ENCODE measurements at regions of chr15 and their contacts with region 1.

Region 1: GRCh38 chr15:34587717-34588674 is 4.5 kb upstream of the GOLGA8B start:
- DNase-seq: peak; percentile 23 to 79 (median 62)
- ATAC-seq: peak; percentile 65
- H3K4me3 ChIP-seq: no peak overlapping the region
- H3K4me3 Mint-ChIP-seq: peak overlapping the region; percentile 72
- H3K27ac ChIP-seq: no peak overlapping the region
- H3K27ac Mint-ChIP-seq: peak overlapping the region; percentile 62
- H3K4me1 ChIP-seq: peaks cover 5% of the 10 kb centered on the region
- H3K4me1 Mint-ChIP-seq: peaks cover 8% of the 10 kb centered on the region
- H3K27me3 ChIP-seq: no peaks in the 10 kb centered on the region
- H3K27me3 Mint-ChIP-seq: peaks cover 18% of the 10 kb centered on the region
- CTCF ChIP-seq: peak; percentile 83

Region 2: DNA sequence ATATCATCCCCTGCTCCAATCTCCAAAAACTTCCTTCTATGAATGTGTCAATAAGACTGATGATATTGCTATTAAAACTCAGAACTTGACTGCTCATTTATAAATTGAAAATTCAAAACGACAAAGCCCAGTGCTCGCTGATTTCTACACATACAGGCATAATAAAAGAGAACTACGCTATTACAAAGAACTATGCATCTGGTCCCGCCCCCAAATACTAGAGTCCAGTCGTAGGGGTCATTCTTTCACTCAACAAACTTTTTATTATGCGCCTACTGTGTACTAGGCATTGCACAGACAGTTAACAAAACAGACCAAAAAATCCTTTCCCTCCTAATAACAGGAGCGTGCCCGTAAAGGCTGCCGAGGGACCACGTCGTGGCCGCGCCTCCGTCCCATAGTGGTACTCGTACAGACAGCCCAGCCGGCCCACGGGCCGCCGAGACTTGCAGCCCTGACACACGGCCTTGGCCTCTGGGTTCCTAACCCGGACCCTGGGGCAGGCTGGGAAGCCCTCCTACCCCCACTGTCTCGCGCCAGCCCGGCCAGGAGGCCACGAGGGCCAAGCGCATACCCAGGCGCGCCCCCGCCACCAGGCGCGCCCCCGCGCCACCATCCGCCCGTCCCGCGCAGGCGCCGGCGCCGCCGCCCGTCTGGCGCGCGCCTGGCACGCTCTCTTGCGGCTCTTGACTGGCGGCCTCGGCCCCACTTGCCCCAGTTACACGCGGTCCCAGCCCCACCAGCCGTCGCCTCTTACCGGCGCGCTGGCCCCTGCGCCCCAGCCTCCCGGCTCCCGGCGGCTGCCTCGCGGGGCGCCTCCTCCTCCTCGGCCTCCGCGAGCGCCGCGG is 549.7 kb before region 1 on chr15:
- CTCF ChIA-PET with region 1: no interaction called
- POLR2A ChIA-PET with region 1: interaction called, 3 read pairs
- intact Hi-C with region 1: loop called in 1 of 2 experiments (anchors 5 kb)
- DNase-seq: peak; percentile 44 to 89 (median 73)
- ATAC-seq: peak; percentile 84
- H3K4me3 ChIP-seq: peak overlapping the region; percentile 78 to 97
- H3K4me3 Mint-ChIP-seq: peak overlapping the region; percentile 94
- H3K27ac ChIP-seq: peak overlapping the region; percentile 75 to 88
- H3K27ac Mint-ChIP-seq: peak overlapping the region; percentile 94
- H3K4me1 ChIP-seq: peaks cover 19% of the 10 kb centered on the region
- H3K4me1 Mint-ChIP-seq: peaks cover 20% of the 10 kb centered on the region
- H3K27me3 ChIP-seq: no peaks in the 10 kb centered on the region
- H3K27me3 Mint-ChIP-seq: no peaks in the 10 kb centered on the region
- CTCF ChIP-seq: no peak

Region 3: DNA sequence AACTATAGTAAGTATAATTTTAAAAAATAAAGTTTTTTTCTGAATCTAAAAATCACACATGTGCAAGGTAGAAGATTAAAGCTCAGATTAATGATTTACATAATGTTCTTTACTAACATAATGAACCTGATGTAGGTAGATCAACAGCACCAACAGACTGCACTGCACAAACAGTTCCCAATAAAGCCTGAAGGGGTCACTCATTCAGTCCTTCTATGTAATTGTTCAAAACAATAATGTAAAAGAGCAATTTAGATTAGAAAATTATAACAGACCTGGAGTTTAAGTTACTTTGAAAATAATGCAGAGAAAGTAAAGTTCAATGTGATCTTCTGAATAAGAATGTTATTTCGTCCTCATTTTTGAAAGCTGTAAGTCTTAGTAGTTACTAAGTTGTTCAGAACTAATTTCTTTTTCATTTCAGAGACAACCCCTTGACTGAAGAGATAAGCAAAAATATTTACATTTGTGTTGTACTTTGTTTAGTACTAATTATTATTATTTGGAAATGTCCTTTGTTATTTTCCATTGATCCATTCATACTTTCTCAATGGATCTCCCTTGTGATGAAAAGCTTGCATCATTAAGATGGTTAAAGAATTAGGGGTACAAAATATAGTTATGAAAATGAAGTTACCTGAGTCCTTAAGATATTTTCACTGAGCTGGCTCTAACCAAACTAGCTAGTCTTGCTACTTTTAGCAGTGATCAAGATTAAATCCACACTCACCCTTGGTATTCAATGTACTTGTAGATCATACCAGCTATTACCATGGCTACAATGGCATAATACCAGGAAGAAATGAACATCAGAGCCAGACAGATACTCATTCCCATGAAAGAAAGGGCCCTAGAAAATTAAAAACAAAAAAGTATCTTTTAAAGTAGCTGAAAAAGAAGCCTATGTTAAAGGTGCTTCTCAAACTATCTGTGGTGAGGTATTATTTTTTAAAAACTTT is 346.3 kb before region 1 on chr15:
- CTCF ChIA-PET with region 1: interaction called, 4 read pairs
- POLR2A ChIA-PET with region 1: no interaction called
- intact Hi-C with region 1: loop called (anchors 5 kb)
- DNase-seq: peak in 5 of 9 experiments; percentile 28 to 74 (median 31)
- ATAC-seq: peak; percentile 93
- H3K4me3 ChIP-seq: no peak overlapping the region
- H3K4me3 Mint-ChIP-seq: no peak overlapping the region
- H3K27ac ChIP-seq: no peak overlapping the region
- H3K27ac Mint-ChIP-seq: no peak overlapping the region
- H3K4me1 ChIP-seq: no peaks in the 10 kb centered on the region
- H3K4me1 Mint-ChIP-seq: peaks cover 3% of the 10 kb centered on the region
- H3K27me3 ChIP-seq: no peaks in the 10 kb centered on the region
- H3K27me3 Mint-ChIP-seq: no peaks in the 10 kb centered on the region
- CTCF ChIP-seq: peak; percentile 95

Region 4: GRCh38 chr15:34514251-34514670 is 73.7 kb before region 1 on chr15:
- CTCF ChIA-PET with region 1: interaction called, 17 read pairs
- POLR2A ChIA-PET with region 1: interaction called, 3 read pairs
- intact Hi-C with region 1: loop called in 1 of 2 experiments (anchors 2 kb)
- DNase-seq: peak in 6 of 9 experiments; percentile 3 to 37 (median 16)
- ATAC-seq: peak; percentile 52
- H3K4me3 ChIP-seq: peak overlapping the region; percentile 45 to 67
- H3K4me3 Mint-ChIP-seq: peak overlapping the region; percentile 80
- H3K27ac ChIP-seq: no peak overlapping the region
- H3K27ac Mint-ChIP-seq: no peak overlapping the region
- H3K4me1 ChIP-seq: peaks cover 6% of the 10 kb centered on the region
- H3K4me1 Mint-ChIP-seq: peaks cover 16% of the 10 kb centered on the region
- H3K27me3 ChIP-seq: peaks cover 0 to 12% of the 10 kb centered on the region in 2 experiments
- H3K27me3 Mint-ChIP-seq: peaks cover 54% of the 10 kb centered on the region
- CTCF ChIP-seq: no peak

Region 5: GRCh38 chr15:35545824-35546510 is 958.0 kb after region 1 on chr15 and contains the start of gene DPH6:
- CTCF ChIA-PET with region 1: no interaction called
- POLR2A ChIA-PET with region 1: no interaction called
- intact Hi-C with region 1: loop called in 1 of 2 experiments (anchors 10 kb)
- DNase-seq: peak; percentile 67 to 93 (median 79)
- ATAC-seq: peak; percentile 87
- H3K4me3 ChIP-seq: peak within 1 kb of the TSS; percentile 74 to 75
- H3K4me3 Mint-ChIP-seq: peak within 1 kb of the TSS; percentile 94
- H3K27ac ChIP-seq: peak within 1 kb of the TSS; percentile 93 to 97
- H3K27ac Mint-ChIP-seq: peak within 1 kb of the TSS; percentile 97
- H3K4me1 ChIP-seq: peaks cover 13% of the 10 kb centered on the region
- H3K4me1 Mint-ChIP-seq: peaks cover 22% of the 10 kb centered on the region
- H3K27me3 ChIP-seq: no peaks in the 10 kb centered on the region
- H3K27me3 Mint-ChIP-seq: no peaks in the 10 kb centered on the region
- CTCF ChIP-seq: no peak
- total RNA-seq, gene DPH6: 5.1 to 6.1 TPM